Endothelial cell of umbilical vein (primary cell): ENCODE measurements at regions of chr18 and their contacts with region 1.

Region 1: GRCh38 chr18:35060122-35060815 is 19.1 kb downstream of the MAPRE2 start:
- DNase-seq: no peak
- H3K4me3 ChIP-seq: no peak overlapping the region
- H3K27ac ChIP-seq: no peak overlapping the region
- H3K4me1 ChIP-seq: no peaks in the 10 kb centered on the region
- H3K27me3 ChIP-seq: no peaks in the 10 kb centered on the region
- CTCF ChIP-seq: no peak
- POLR2A ChIP-seq: no peak

Region 2: GRCh38 chr18:35050028-35050546 is 10.2 kb before region 1 on chr18:
- CTCF ChIA-PET with region 1: interaction called, 10 read pairs
- POLR2A ChIA-PET with region 1: interaction called, 4 read pairs
- dilution Hi-C with region 1: no loop called
- intact Hi-C with region 1: no loop called
- DNase-seq: no peak
- H3K4me3 ChIP-seq: no peak overlapping the region
- H3K27ac ChIP-seq: no peak overlapping the region
- H3K4me1 ChIP-seq: peaks cover 28% of the 10 kb centered on the region
- H3K27me3 ChIP-seq: no peaks in the 10 kb centered on the region
- CTCF ChIP-seq: no peak
- POLR2A ChIP-seq: no peak

Region 3: GRCh38 chr18:35122586-35123224 is 62.4 kb after region 1 on chr18:
- CTCF ChIA-PET with region 1: no interaction called
- POLR2A ChIA-PET with region 1: no interaction called
- dilution Hi-C with region 1: no loop called
- intact Hi-C with region 1: no loop called
- DNase-seq: no peak
- H3K4me3 ChIP-seq: no peak overlapping the region
- H3K27ac ChIP-seq: no peak overlapping the region
- H3K4me1 ChIP-seq: no peaks in the 10 kb centered on the region
- H3K27me3 ChIP-seq: no peaks in the 10 kb centered on the region
- CTCF ChIP-seq: no peak
- POLR2A ChIP-seq: no peak